Cardiac septum (tissue), 1 donor: ENCODE measurements at regions of chr3 and their contacts with region 1.

Region 1: DNA sequence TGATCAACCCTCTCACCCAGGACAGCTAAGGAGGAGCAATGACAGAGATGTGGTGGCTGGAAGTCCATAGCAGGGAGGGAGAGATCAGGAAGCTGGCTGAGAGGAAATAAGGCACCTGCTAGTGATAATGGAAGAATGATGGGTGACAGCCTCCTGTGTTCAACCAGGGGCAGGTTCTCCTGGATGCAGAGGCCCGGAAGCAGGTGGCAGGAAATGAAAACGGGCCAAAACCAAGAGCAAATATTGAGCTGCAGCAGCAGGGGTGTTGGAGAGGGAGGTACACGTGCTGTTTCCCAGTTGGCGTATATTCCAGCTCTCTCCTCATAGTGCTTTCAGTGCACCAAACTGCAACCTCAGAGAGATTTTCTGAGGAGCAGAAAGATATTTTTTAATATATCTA is 213.4 kb upstream of the TBL1XR1 start:
- DNase-seq: no peak

Region 2: GRCh38 chr3:177102553-177102952 is 308.2 kb before region 1 on chr3:
- intact Hi-C with region 1: no loop called
- DNase-seq: no peak

Region 3: DNA sequence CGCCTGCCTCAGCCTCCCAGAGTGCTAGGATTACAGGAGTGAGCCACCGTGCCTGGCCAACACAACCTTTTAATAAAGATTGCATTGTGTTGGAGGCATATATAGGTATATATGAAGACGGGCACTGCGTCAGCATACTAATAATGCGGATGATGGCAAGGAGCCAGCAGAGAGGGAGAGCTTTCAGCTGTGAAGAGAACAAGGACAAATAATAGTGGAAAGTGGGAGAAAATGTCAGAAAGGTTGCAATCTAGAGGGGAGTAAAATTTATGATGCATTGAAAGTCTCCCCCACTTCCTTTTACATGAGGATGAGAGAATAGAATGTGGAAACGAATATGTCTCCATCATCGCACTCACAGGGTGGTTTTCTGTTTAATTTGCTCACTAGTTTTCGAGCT is 42.9 kb before region 1 on chr3:
- intact Hi-C with region 1: loop called (anchors 5 kb)
- DNase-seq: no peak

Region 4: GRCh38 chr3:177753451-177754155 is 342.9 kb after region 1 on chr3:
- intact Hi-C with region 1: no loop called
- DNase-seq: no peak